Vagina (tissue), 2 donors: ENCODE measurements at regions of chr3 and their contacts with region 1.

Region 1: DNA sequence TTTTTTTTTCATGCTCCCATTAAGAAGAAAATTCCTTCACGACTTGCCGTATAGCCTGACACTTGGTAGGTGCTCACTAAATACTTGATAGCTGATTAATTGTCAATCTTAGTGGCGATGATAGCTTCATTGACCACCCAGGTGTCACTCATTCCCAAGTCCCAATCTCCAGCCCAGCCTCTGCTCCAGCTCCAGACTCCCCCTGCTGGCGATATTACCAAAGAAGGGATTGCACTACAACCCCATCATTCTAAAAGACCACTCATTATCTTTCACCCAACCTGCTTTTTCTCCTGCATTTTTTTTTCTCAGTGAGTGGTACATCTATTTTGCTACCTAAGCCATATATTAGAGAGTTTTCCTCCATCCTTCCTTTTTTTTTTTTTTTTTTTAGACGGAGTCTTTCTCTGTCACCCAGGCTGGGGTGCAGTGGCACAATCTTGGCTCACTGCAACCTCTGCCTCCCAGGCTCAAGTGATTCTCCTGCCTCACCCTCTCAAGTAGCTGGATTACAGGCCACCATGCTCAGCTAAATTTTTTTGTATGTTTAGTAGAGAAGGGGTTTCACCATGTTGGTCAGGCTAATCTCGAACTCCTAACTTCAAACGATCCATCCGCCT is 19.5 kb upstream of the COMMD2 start:
- DNase-seq: no peak
- H3K4me3 ChIP-seq: no peak overlapping the region
- H3K27ac ChIP-seq: no peak overlapping the region
- H3K4me1 ChIP-seq: no peaks in the 10 kb centered on the region
- H3K27me3 ChIP-seq: no peaks in the 10 kb centered on the region
- CTCF ChIP-seq: peak; percentile 44 to 66 (median 59)
- POLR2A ChIP-seq: no peak

Region 2: DNA sequence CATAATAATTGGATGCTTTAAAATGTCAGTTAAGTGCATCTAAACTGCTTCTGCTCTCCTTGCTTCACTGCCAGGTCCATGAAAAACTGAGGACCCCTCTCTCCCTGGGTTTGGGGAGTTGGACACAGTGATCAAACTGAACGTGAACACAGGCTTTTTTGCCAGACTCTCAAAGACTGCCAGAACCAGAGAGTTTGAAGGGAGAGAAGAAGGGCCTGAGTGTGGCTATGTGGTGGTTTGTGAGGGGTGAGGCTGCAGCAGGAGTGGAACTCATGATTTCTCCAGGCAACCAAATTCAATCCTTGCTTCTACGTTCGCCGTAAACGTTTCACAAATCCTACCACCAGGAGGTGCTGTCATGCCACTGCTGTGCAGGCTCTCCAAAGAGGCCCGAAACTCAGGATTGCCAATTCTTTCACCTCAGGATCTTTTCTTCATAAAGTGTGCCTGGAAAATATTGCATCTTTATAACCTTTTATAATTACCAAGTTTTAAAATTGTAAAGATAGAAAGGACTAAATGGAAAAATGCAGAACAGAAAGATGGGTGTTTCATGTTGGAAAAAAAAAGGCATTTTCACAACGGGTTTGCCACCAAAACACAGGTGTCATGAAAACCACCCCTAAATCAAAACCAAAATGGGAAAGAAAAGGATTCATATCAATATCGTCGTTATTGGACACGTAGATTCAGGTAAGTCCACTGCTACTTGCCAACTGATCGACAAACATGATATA is 277.6 kb before region 1 on chr3:
- intact Hi-C with region 1: loop called (anchors 10 kb)
- DNase-seq: peak in 1 of 2 donors; percentile 74
- H3K4me3 ChIP-seq: no peak overlapping the region
- H3K27ac ChIP-seq: no peak overlapping the region
- H3K4me1 ChIP-seq: no peaks in the 10 kb centered on the region
- H3K27me3 ChIP-seq: no peaks in the 10 kb centered on the region
- CTCF ChIP-seq: peak; percentile 28 to 79 (median 63)
- POLR2A ChIP-seq: no peak

Region 3: DNA sequence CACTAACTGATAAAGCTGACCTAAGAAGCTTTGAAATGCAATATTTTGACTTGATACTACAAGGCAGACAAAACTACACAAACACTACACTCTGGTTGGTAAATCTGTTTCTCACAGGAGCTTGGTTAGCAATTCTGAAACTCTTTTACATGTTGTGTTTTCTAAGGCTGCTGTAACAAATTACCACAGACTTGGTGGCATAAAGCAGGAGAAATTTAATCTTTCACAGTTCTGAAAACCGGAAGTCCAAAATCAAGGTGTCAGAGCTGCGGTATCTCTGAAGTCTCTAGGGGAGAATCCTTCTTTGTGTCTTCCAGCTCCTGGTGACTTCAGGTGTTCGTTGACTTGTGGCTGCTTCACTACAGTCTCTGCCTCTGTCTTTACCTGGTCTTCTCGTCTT is 211.9 kb after region 1 on chr3:
- intact Hi-C with region 1: no loop called
- DNase-seq: no peak
- H3K4me3 ChIP-seq: no peak overlapping the region
- H3K27ac ChIP-seq: no peak overlapping the region
- H3K4me1 ChIP-seq: no peaks in the 10 kb centered on the region
- H3K27me3 ChIP-seq: no peaks in the 10 kb centered on the region
- CTCF ChIP-seq: no peak
- POLR2A ChIP-seq: no peak